ENCODE measurements at regions of chr5 and their contacts with region 1.

Region 1: GRCh38 chr5:77972469-77973252 is 196.5 kb upstream of the TBCA start:
- DNase-seq: peak; percentile 41
- ATAC-seq: peak; percentile 71
- H3K4me3 Mint-ChIP-seq: peak overlapping the region; percentile 69
- H3K27ac Mint-ChIP-seq: no peak overlapping the region
- H3K4me1 Mint-ChIP-seq: peaks cover 17% of the 10 kb centered on the region
- H3K27me3 Mint-ChIP-seq: peaks cover 46% of the 10 kb centered on the region
- CTCF ChIP-seq: no peak

Region 2: GRCh38 chr5:77645158-77645994 is 327.3 kb before region 1 on chr5:
- CTCF ChIA-PET with region 1: no interaction called
- POLR2A ChIA-PET with region 1: no interaction called
- intact Hi-C with region 1: loop called (anchors 1 kb)
- DNase-seq: peak; percentile 66
- ATAC-seq: peak; percentile 83
- H3K4me3 Mint-ChIP-seq: peak overlapping the region; percentile 75
- H3K27ac Mint-ChIP-seq: no peak overlapping the region
- H3K4me1 Mint-ChIP-seq: peaks cover 15% of the 10 kb centered on the region
- H3K27me3 Mint-ChIP-seq: peaks cover 65% of the 10 kb centered on the region
- CTCF ChIP-seq: no peak

Region 3: GRCh38 chr5:77852514-77853352 is 119.9 kb before region 1 on chr5:
- CTCF ChIA-PET with region 1: no interaction called
- POLR2A ChIA-PET with region 1: interaction called, 3 read pairs
- intact Hi-C with region 1: loop called (anchors 1 kb)
- DNase-seq: peak; percentile 68
- ATAC-seq: peak; percentile 89
- H3K4me3 Mint-ChIP-seq: peak overlapping the region; percentile 81
- H3K27ac Mint-ChIP-seq: peak overlapping the region; percentile 92
- H3K4me1 Mint-ChIP-seq: peaks cover 17% of the 10 kb centered on the region
- H3K27me3 Mint-ChIP-seq: no peaks in the 10 kb centered on the region
- CTCF ChIP-seq: no peak

Region 4: DNA sequence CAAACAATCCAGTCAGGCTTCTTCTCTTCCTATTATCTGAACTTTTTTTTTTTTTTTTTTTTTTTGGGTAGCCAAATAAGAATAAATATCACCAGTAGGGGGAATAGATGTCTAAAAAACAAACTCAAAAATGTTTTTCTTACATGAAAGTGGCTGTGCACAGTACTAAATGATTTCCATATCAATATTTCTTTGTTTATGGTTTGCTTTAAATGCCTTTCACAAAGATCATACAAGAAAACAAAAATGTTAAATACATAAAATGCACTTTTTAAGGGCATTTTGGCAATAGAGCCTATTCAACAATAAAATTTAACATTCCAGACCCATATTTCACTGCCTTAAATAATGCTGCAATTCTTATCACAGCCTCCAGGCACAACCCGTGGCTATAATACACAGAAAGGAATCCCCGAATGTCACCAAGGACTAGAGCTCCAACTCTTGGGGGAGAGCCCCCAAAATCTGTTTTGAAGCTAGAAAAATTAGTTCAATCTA is 105.4 kb before region 1 on chr5:
- CTCF ChIA-PET with region 1: no interaction called
- POLR2A ChIA-PET with region 1: no interaction called
- intact Hi-C with region 1: loop called (anchors 5 kb)
- DNase-seq: no peak
- ATAC-seq: no peak
- H3K4me3 Mint-ChIP-seq: no peak overlapping the region
- H3K27ac Mint-ChIP-seq: no peak overlapping the region
- H3K4me1 Mint-ChIP-seq: no peaks in the 10 kb centered on the region
- H3K27me3 Mint-ChIP-seq: no peaks in the 10 kb centered on the region
- CTCF ChIP-seq: no peak

Region 5: GRCh38 chr5:78076351-78076750 is 103.7 kb after region 1 on chr5:
- CTCF ChIA-PET with region 1: no interaction called
- POLR2A ChIA-PET with region 1: no interaction called
- intact Hi-C with region 1: no loop called
- DNase-seq: no peak
- ATAC-seq: peak; percentile 87
- H3K4me3 Mint-ChIP-seq: no peak overlapping the region
- H3K27ac Mint-ChIP-seq: peak overlapping the region; percentile 50
- H3K4me1 Mint-ChIP-seq: peaks cover 22% of the 10 kb centered on the region
- H3K27me3 Mint-ChIP-seq: no peaks in the 10 kb centered on the region
- CTCF ChIP-seq: no peak

Measured in activated B cell treated with CpG ODN at 0.5 μM for 24 hours (primary cell).